Lower leg skin (tissue), 4 donors: ENCODE measurements at regions of chr7 and their contacts with region 1.

Region 1: GRCh38 chr7:145431834-145432233 is 596.0 kb upstream of the TPK1 start:
- DNase-seq: no peak
- H3K4me3 ChIP-seq: no peak overlapping the region
- CTCF ChIP-seq: no peak
- POLR2A ChIP-seq: no peak

Region 2: DNA sequence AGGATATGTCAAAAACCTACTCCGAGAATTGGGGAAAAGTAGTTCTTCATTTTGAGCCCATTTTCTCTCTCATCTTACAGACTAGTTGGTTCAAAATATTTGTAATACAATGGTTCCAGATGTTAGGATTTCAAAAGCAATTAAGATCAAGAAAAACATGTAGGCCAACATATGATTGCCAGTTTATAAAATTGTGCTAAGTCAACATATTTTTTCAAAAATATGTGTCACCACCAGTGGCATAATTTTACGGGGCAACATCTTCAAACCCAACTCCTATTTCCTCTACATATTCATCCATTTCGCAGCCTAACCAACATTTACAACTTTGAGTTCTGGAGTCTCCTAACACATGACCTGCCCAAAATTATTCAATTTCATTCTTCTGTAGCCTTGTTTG is 81.5 kb before region 1 on chr7:
- intact Hi-C with region 1: loop called (anchors 10 kb)
- DNase-seq: no peak
- H3K4me3 ChIP-seq: no peak overlapping the region
- CTCF ChIP-seq: no peak
- POLR2A ChIP-seq: no peak

Region 3: DNA sequence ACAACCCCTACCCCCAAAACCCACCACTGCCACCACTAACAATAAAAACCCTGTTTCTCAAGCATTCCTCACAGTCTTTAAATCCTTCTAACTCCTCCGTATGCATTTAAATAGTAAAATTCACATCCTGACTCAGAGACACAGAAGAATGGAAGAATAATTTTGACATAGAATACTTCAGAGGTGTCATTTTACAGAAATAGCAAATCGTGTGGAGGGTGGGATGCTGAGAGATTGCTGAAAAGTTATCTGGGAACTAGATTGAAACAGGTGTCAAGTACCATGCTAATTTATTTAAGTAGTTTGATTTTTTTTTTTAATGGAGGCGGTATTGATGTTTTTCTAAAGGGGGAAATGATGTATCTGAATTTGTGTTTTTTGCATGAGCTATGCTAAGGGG is 20.8 kb before region 1 on chr7:
- intact Hi-C with region 1: no loop called
- DNase-seq: no peak
- H3K4me3 ChIP-seq: no peak overlapping the region
- CTCF ChIP-seq: no peak
- POLR2A ChIP-seq: no peak